ENCODE measurements at regions of chr11 and their contacts with region 1.

Region 1: DNA sequence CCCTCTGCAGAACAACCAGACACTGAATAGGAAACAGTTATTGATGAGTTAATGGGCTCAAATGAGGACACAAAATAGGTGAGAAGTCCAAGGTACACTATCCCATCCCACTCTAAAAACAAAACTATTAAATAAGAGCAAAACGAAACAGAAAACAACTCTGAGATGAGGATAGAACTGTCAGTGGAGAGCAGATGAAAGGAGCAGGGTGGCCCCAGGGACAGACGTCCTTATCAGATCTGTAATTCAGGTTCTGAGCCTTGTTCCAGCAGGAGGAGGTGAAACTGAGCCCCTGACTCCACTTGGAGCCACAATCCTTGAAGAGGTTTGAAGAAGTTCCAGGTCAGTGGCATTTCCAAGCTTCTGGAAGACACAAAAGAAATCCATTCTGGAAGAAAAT is 8.5 kb upstream of the SNX19 start:
- DNase-seq: no peak
- H3K4me3 ChIP-seq: no peak overlapping the region
- H3K27ac ChIP-seq: no peak overlapping the region
- H3K4me1 ChIP-seq: no peaks in the 10 kb centered on the region
- H3K27me3 ChIP-seq: peaks cover 40% of the 10 kb centered on the region
- CTCF ChIP-seq: no peak

Region 2: GRCh38 chr11:131041331-131042040 is 116.7 kb after region 1 on chr11:
- CTCF ChIA-PET with region 1: no interaction called
- POLR2A ChIA-PET with region 1: no interaction called
- intact Hi-C with region 1: loop called (anchors 5 kb)
- DNase-seq: peak; percentile 34 to 91
- H3K4me3 ChIP-seq: no peak overlapping the region
- H3K27ac ChIP-seq: peak overlapping the region; percentile 77
- H3K4me1 ChIP-seq: peaks cover 32% of the 10 kb centered on the region
- H3K27me3 ChIP-seq: peaks cover 9% of the 10 kb centered on the region
- CTCF ChIP-seq: no peak

Region 3: DNA sequence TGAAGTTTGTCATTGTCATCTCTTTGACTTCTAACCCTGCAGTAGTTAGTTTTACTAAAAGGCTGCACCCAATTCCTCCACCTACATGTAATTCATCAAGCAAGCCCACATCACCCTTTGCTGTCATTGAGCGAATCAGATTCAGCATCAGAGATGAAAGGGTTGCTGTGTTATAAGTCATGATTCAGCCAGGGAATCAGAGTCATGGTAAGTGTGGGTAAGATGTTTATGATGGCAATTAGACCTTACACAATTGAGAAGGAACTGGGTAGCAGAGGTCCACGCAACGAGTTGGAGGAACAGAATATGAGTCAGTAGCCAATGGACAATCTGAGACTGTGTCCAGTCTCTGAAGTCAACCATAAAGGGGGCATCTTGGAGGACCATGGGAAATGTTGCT is 154.3 kb after region 1 on chr11:
- CTCF ChIA-PET with region 1: no interaction called
- POLR2A ChIA-PET with region 1: no interaction called
- intact Hi-C with region 1: no loop called
- DNase-seq: no peak
- H3K4me3 ChIP-seq: no peak overlapping the region
- H3K27ac ChIP-seq: no peak overlapping the region
- H3K4me1 ChIP-seq: no peaks in the 10 kb centered on the region
- H3K27me3 ChIP-seq: peaks cover 37% of the 10 kb centered on the region; the same call in 1 of the 2 replicates
- CTCF ChIP-seq: no peak

Region 4: GRCh38 chr11:131511794-131512193 is 587.0 kb after region 1 on chr11:
- CTCF ChIA-PET with region 1: no interaction called
- POLR2A ChIA-PET with region 1: no interaction called
- intact Hi-C with region 1: loop called (anchors 5 kb)
- DNase-seq: peak; percentile 42 to 59
- H3K4me3 ChIP-seq: no peak overlapping the region
- H3K27ac ChIP-seq: no peak overlapping the region
- H3K4me1 ChIP-seq: no peaks in the 10 kb centered on the region
- H3K27me3 ChIP-seq: peaks cover 17% of the 10 kb centered on the region
- CTCF ChIP-seq: peak; percentile 60

Region 5: DNA sequence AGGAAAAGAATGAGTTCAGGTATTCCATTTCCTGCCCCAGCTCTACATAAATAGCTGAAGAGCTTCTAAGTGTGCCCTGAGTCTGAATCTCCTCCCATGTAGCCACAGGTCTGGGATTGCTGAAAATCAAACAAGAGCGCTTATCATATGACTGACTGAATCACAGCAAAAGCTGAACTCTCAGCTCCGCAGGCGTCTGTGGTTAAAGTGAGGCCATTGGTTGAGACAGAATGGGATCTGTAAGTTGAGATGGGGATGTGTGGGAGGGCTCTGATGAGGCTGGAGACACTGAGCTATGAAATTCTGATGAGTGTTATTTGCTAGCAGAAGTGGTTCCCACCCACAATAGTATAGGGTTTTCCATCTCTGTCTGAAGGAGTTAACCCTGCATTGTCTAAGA is 1970.6 kb after region 1 on chr11:
- CTCF ChIA-PET with region 1: no interaction called
- POLR2A ChIA-PET with region 1: no interaction called
- intact Hi-C with region 1: no loop called
- DNase-seq: no peak
- H3K4me3 ChIP-seq: no peak overlapping the region
- H3K27ac ChIP-seq: no peak overlapping the region
- H3K4me1 ChIP-seq: no peaks in the 10 kb centered on the region
- H3K27me3 ChIP-seq: 0 out of 2 replicates have a peak, but pooled peaks cover 11% of the 10 kb centered on the region
- CTCF ChIP-seq: no peak

Measured in PC-9 (cell line).